ENCODE measurements at regions of chr19 and their contacts with region 1.

Region 1: GRCh38 chr19:49430678-49431329 is 5.6 kb downstream of the GFY start:
- DNase-seq: no peak
- H3K4me3 Mint-ChIP-seq: no peak overlapping the region
- H3K27ac Mint-ChIP-seq: no peak overlapping the region
- H3K4me1 Mint-ChIP-seq: peaks cover 31% of the 10 kb centered on the region
- H3K27me3 Mint-ChIP-seq: peaks cover 85% of the 10 kb centered on the region

Region 2: GRCh38 chr19:49363268-49364082 is 67.3 kb before region 1 on chr19 and contains the start of gene DKKL1:
- intact Hi-C with region 1: loop called (anchors 2 kb)
- DNase-seq: peak; percentile 72
- H3K4me3 Mint-ChIP-seq: no peak within 1 kb of the TSS
- H3K27ac Mint-ChIP-seq: no peak within 1 kb of the TSS
- H3K4me1 Mint-ChIP-seq: peaks cover 6% of the 10 kb centered on the region
- H3K27me3 Mint-ChIP-seq: peaks cover 32% of the 10 kb centered on the region
- total RNA-seq, gene DKKL1: not detected in 2 replicates

Region 3: GRCh38 chr19:49391581-49392399 is 39.0 kb before region 1 on chr19:
- intact Hi-C with region 1: loop called (anchors 1 kb)
- DNase-seq: peak; percentile 71
- H3K4me3 Mint-ChIP-seq: no peak overlapping the region
- H3K27ac Mint-ChIP-seq: peak overlapping the region; percentile 5
- H3K4me1 Mint-ChIP-seq: peaks cover 12% of the 10 kb centered on the region
- H3K27me3 Mint-ChIP-seq: peaks cover 3% of the 10 kb centered on the region

Region 4: GRCh38 chr19:49403404-49404187 is 27.2 kb before region 1 on chr19:
- intact Hi-C with region 1: no loop called
- DNase-seq: no peak
- H3K4me3 Mint-ChIP-seq: no peak overlapping the region
- H3K27ac Mint-ChIP-seq: no peak overlapping the region
- H3K4me1 Mint-ChIP-seq: peaks cover 13% of the 10 kb centered on the region
- H3K27me3 Mint-ChIP-seq: peaks cover 7% of the 10 kb centered on the region

Region 5: GRCh38 chr19:49473868-49474544 is 43.2 kb after region 1 on chr19 and contains the start of gene FLT3LG:
- intact Hi-C with region 1: no loop called
- DNase-seq: peak; percentile 94
- H3K4me3 Mint-ChIP-seq: peak within 1 kb of the TSS; percentile 91
- H3K27ac Mint-ChIP-seq: peak within 1 kb of the TSS; percentile 97
- H3K4me1 Mint-ChIP-seq: peaks cover 45% of the 10 kb centered on the region
- H3K27me3 Mint-ChIP-seq: no peaks in the 10 kb centered on the region
- total RNA-seq, gene FLT3LG: 58.4 and 65.4 TPM in 2 replicates

Region 6: GRCh38 chr19:49487277-49488045 is 56.7 kb after region 1 on chr19 and contains the start of gene RPL13A:
- intact Hi-C with region 1: no loop called
- DNase-seq: peak; percentile 100
- H3K4me3 Mint-ChIP-seq: peak within 1 kb of the TSS; percentile 98
- H3K27ac Mint-ChIP-seq: peak within 1 kb of the TSS; percentile 94
- H3K4me1 Mint-ChIP-seq: peaks cover 27% of the 10 kb centered on the region
- H3K27me3 Mint-ChIP-seq: peaks cover 4% of the 10 kb centered on the region
- total RNA-seq, gene RPL13A: 2,876 and 2,988 TPM in 2 replicates

Region 7: DNA sequence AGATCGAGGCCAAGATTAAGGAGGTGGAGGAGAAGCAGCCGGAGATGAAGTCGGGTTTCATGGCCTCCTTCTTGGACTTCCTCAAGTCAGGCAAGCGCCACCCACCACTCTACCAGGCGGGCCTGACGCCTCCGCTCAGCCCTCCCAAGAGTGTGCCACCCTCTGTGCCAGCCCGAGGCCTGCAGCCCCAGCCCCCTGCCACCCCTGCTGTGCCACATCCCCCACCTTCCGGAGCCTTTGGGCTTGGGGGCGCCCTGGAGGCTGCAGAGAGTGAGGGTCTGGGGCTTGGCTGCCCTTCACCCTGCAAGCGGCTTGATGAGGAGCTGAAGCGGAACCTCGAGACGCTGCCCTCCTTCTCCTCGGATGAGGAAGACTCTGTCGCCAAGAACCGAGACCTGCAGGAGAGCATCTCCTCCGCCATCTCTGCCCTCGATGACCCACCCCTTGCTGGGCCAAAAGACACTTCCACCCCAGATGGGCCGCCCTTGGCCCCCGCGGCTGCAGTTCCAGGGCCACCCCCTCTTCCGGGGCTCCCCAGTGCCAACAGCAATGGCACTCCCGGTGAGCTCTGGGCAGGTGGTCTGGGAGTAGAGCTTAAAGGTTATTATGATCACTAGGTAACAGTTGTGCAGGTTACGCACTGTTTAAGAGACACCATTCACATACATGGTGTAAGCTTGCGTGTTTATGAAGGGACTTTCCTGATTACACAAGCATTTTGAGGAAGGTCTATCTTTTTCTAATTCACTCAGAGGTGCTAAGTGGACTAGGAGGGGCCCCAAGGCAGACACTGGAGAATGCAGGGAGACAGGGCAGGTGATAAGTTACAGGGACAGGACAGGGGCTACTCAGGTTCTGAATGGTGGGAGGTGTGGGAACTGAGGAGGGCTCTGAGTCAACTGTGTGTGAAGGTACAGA is 168.8 kb after region 1 on chr19:
- intact Hi-C with region 1: no loop called
- DNase-seq: no peak
- H3K4me3 Mint-ChIP-seq: no peak overlapping the region
- H3K27ac Mint-ChIP-seq: no peak overlapping the region
- H3K4me1 Mint-ChIP-seq: no peaks in the 10 kb centered on the region
- H3K27me3 Mint-ChIP-seq: no peaks in the 10 kb centered on the region

Measured in activated T-helper 1 cell treated with anti-CD3 and anti-CD28 coated beads, Interleukin-12 subunit alpha, Interleukin-12 subunit beta, Interleukin-2, Interleukin-4 antibody, amounts not matched to agents 30 ng/mL and 10 ng/mL and 1 ng/mL, durations not matched to agents 14 hours and 24 hours and 36 hours (primary cell).